T-cell (primary cell): ENCODE measurements at regions of chr10 and their contacts with region 1.

Region 1: GRCh38 chr10:75235375-75236177 is at the start of gene COMTD1:
- DNase-seq: peak; percentile 77 to 95 (median 89)
- ATAC-seq: peak; percentile 68 to 74 (median 70)
- H3K4me3 ChIP-seq: peak within 1 kb of the TSS; percentile 79 to 82
- H3K4me3 Mint-ChIP-seq: peak within 1 kb of the TSS; percentile 72 to 83 (median 79)
- H3K27ac ChIP-seq: peak within 1 kb of the TSS; percentile 63
- H3K27ac Mint-ChIP-seq: peak within 1 kb of the TSS; percentile 86 to 99
- H3K4me1 ChIP-seq: peaks cover 0 to 27% of the 10 kb centered on the region in 2 experiments
- H3K4me1 Mint-ChIP-seq: peaks cover 16 to 27% (median 16%) of the 10 kb centered on the region in 3 donors
- H3K27me3 ChIP-seq: no peaks in the 10 kb centered on the region
- H3K27me3 Mint-ChIP-seq: no peaks in the 10 kb centered on the region
- total RNA-seq, gene COMTD1: 11.2 to 39.0 (median 33.8) TPM

Region 2: GRCh38 chr10:75187961-75188426 is 47.6 kb before region 1 on chr10:
- CTCF ChIA-PET with region 1: interaction called, 28 to 54 read pairs
- POLR2A ChIA-PET with region 1: interaction called in 1 of 2 experiments, 7 read pairs
- DNase-seq: peak; percentile 36 to 88 (median 69)
- ATAC-seq: peak; percentile 93 to 99 (median 95)
- H3K4me3 ChIP-seq: no peak overlapping the region
- H3K4me3 Mint-ChIP-seq: peak overlapping the region in 1 of 3 donors; percentile 13
- H3K27ac ChIP-seq: peak overlapping the region; percentile 61
- H3K27ac Mint-ChIP-seq: peak overlapping the region; percentile 91 to 93
- H3K4me1 ChIP-seq: peaks cover 4 to 10% of the 10 kb centered on the region in 2 experiments
- H3K4me1 Mint-ChIP-seq: peaks cover 6 to 8% (median 6%) of the 10 kb centered on the region in 3 donors
- H3K27me3 ChIP-seq: no peaks in the 10 kb centered on the region
- H3K27me3 Mint-ChIP-seq: no peaks in the 10 kb centered on the region

Region 3: GRCh38 chr10:76456190-76456589 is 1220.6 kb after region 1 on chr10:
- CTCF ChIA-PET with region 1: no interaction called
- POLR2A ChIA-PET with region 1: no interaction called
- DNase-seq: no peak
- ATAC-seq: no peak
- H3K4me3 ChIP-seq: no peak overlapping the region
- H3K4me3 Mint-ChIP-seq: no peak overlapping the region
- H3K27ac ChIP-seq: no peak overlapping the region
- H3K27ac Mint-ChIP-seq: no peak overlapping the region
- H3K4me1 ChIP-seq: no peaks in the 10 kb centered on the region
- H3K4me1 Mint-ChIP-seq: no peaks in the 10 kb centered on the region
- H3K27me3 ChIP-seq: no peaks in the 10 kb centered on the region
- H3K27me3 Mint-ChIP-seq: peaks cover 0 to 5% of the 10 kb centered on the region in 2 donors